Heart right ventricle (tissue), 16 donors: ENCODE measurements at regions of chr1 and their contacts with region 1.

Region 1: GRCh38 chr1:224287714-224288113 is 42.3 kb downstream of the NVL start:
- DNase-seq: no peak
- ATAC-seq: no peak
- H3K4me3 ChIP-seq: no peak overlapping the region
- H3K27ac ChIP-seq: no peak overlapping the region
- H3K4me1 ChIP-seq: no peaks in the 10 kb centered on the region
- H3K27me3 ChIP-seq: no peaks in the 10 kb centered on the region
- CTCF ChIP-seq: no peak

Region 2: GRCh38 chr1:224168859-224169380 is 118.8 kb before region 1 on chr1:
- intact Hi-C with region 1: loop called in 1 of 10 experiments (anchors 10 kb)
- DNase-seq: peak in 1 of 2 donors; percentile 59
- ATAC-seq: peak; percentile 75 to 97 (median 90)
- H3K4me3 ChIP-seq: peak overlapping the region in 1 of 10 donors; percentile 5
- H3K27ac ChIP-seq: peak overlapping the region in 7 of 10 donors; percentile 26 to 84 (median 60)
- H3K4me1 ChIP-seq: peaks cover 4 to 24% (median 12%) of the 10 kb centered on the region in 9 donors
- H3K27me3 ChIP-seq: no peaks in the 10 kb centered on the region
- CTCF ChIP-seq: no peak

Region 3: GRCh38 chr1:224392411-224393249 is 104.9 kb after region 1 on chr1:
- intact Hi-C with region 1: loop called in 2 of 10 experiments (anchors 10 kb)
- DNase-seq: no peak
- ATAC-seq: no peak
- H3K4me3 ChIP-seq: no peak overlapping the region
- H3K27ac ChIP-seq: no peak overlapping the region
- H3K4me1 ChIP-seq: peaks cover 0 to 6% (median 0%) of the 10 kb centered on the region in 9 donors
- H3K27me3 ChIP-seq: no peaks in the 10 kb centered on the region
- CTCF ChIP-seq: no peak

Region 4: GRCh38 chr1:224411766-224412165 is 124.1 kb after region 1 on chr1:
- intact Hi-C with region 1: loop called in 1 of 10 experiments (anchors 10 kb)
- DNase-seq: no peak
- ATAC-seq: no peak
- H3K4me3 ChIP-seq: no peak overlapping the region
- H3K27ac ChIP-seq: no peak overlapping the region
- H3K4me1 ChIP-seq: peaks cover 0 to 6% (median 0%) of the 10 kb centered on the region in 9 donors
- H3K27me3 ChIP-seq: no peaks in the 10 kb centered on the region
- CTCF ChIP-seq: no peak